ENCODE measurements at regions of chr13 and their contacts with region 1.

Region 1: DNA sequence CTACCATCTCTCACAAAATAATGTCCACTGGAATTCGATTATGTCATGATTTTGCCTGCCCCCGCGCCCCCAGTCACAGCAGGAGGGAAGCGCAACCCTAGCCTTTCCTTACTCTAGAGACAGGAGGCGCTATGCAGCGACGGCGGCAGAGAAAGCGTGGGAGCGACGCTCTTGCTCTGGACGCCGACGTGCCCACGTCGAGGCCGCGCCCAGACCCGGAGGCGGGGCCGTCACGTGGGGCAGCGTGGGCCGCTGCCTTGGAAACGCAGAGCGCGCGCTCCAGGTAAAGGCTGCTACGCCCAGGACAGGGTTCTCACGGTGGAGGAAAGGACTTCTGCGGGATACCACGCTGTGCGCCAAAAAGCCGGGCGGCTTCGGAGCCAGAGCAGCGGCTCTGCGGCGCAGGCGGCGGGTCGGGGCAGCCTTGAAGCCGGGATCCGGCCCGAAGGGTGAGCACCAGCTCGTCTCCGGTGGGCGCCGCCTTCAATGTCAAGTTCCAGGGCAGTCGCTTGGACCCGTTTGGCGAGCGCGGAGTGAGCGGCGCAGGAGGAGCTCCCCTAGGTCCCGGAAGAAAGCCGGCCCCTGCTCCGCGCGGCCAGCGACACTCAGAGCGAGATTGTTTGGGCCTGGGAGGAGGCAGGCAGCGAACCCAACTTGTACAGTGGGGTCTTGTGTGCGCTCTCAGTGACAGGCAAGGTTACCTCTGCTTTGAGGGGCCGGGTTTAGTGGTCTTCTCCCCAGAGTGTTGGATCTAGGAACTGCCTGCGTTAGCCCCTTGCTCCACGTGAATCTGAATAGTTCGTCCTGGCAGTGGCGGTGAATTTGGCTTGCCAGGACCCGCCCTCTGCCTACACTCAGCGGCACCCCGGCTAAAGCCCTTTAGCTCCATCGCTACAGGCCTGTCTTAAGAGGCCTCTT is 121.7 kb downstream of the MRPL57 start:
- DNase-seq: peak; percentile 84 to 86 (median 85)
- H3K4me3 ChIP-seq: peak overlapping the region; percentile 55 to 77
- H3K4me3 Mint-ChIP-seq: peak overlapping the region; percentile 80 to 90 (median 83)
- H3K27ac ChIP-seq: peak overlapping the region; percentile 59
- H3K27ac Mint-ChIP-seq: peak overlapping the region; percentile 38 to 89 (median 82)
- H3K4me1 ChIP-seq: peaks cover 24% of the 10 kb centered on the region
- H3K4me1 Mint-ChIP-seq: peaks cover 10 to 25% (median 18%) of the 10 kb centered on the region in 4 donors
- H3K27me3 ChIP-seq: no peaks in the 10 kb centered on the region
- H3K27me3 Mint-ChIP-seq: no peaks in the 10 kb centered on the region

Region 2: GRCh38 chr13:20940083-20940880 is 357.9 kb before region 1 on chr13:
- CTCF ChIA-PET with region 1: interaction called, 5 read pairs
- POLR2A ChIA-PET with region 1: no interaction called
- intact Hi-C with region 1: loop called (anchors 5 kb)
- DNase-seq: no peak
- H3K4me3 ChIP-seq: no peak overlapping the region
- H3K4me3 Mint-ChIP-seq: no peak overlapping the region
- H3K27ac ChIP-seq: no peak overlapping the region
- H3K27ac Mint-ChIP-seq: no peak overlapping the region
- H3K4me1 ChIP-seq: peaks cover 3% of the 10 kb centered on the region
- H3K4me1 Mint-ChIP-seq: peaks cover 0 to 8% (median under 1%) of the 10 kb centered on the region in 4 donors
- H3K27me3 ChIP-seq: no peaks in the 10 kb centered on the region
- H3K27me3 Mint-ChIP-seq: peaks cover 25 to 30% of the 10 kb centered on the region in 2 donors

Region 3: DNA sequence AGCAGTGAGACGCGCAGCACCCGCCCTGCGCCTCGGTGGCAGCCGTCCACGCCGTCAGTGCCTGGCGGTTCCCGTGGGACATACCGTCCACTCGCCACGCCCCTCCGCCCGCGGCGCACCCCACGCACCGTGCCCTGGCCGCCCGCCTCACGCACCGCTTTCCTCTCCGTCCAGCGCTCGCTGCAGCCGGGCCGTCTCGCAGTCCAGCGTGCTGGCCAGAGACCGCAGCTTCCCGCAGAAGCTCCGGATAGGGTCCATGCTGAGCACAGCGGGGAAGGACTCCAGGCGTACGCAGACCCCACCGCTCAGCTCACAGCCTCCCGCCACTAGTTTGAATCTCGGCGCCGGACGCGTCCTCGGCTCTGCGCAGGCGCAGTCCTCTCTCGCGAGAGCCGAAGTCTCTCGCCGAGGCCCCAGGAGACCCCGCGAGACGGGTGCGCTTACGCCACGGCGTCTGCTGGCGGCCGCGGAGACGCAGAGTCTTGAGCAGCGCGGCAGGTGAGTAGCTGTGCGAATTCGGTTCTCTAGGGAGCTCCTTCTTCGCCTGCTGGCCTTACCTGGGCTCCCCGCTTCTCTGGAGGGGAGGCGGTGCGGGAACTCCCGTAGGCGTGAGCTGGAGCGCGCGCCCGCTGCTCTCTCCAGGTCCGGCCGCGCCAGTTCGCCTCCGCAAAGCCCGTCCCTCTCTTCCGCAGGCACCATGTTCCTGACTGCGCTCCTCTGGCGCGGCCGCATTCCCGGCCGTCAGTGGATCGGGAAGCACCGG is 121.8 kb before region 1 on chr13 and contains the starts of genes MRPL57 and SKA3:
- CTCF ChIA-PET with region 1: interaction called, 17 read pairs
- POLR2A ChIA-PET with region 1: interaction called, 9 read pairs
- intact Hi-C with region 1: loop called (anchors 1 kb)
- DNase-seq: peak; percentile 92 to 95 (median 95)
- H3K4me3 ChIP-seq: peak within 1 kb of the TSS; percentile 57 to 84
- H3K4me3 Mint-ChIP-seq: peak within 1 kb of the TSS; percentile 91 to 99 (median 97)
- H3K27ac ChIP-seq: peak within 1 kb of the TSS; percentile 89
- H3K27ac Mint-ChIP-seq: peak within 1 kb of the TSS; percentile 91 to 99 (median 97)
- H3K4me1 ChIP-seq: peaks cover 21% of the 10 kb centered on the region
- H3K4me1 Mint-ChIP-seq: peaks cover 12 to 31% (median 17%) of the 10 kb centered on the region in 4 donors
- H3K27me3 ChIP-seq: no peaks in the 10 kb centered on the region
- H3K27me3 Mint-ChIP-seq: no peaks in the 10 kb centered on the region
- total RNA-seq, gene MRPL57: 22.8 to 24.5 TPM
- total RNA-seq, gene SKA3: 0.33 TPM in 1 of 2 experiments, not detected in the other

Region 4: GRCh38 chr13:21458813-21459701 is 160.9 kb after region 1 on chr13 and contains the start of gene ZDHHC20:
- CTCF ChIA-PET with region 1: interaction called, 9 read pairs
- POLR2A ChIA-PET with region 1: interaction called, 21 read pairs
- intact Hi-C with region 1: loop called (anchors 1 kb)
- DNase-seq: peak; percentile 82 to 93 (median 86)
- H3K4me3 ChIP-seq: peak within 1 kb of the TSS; percentile 34 to 72
- H3K4me3 Mint-ChIP-seq: peak within 1 kb of the TSS; percentile 92 to 95 (median 94)
- H3K27ac ChIP-seq: peak within 1 kb of the TSS; percentile 86
- H3K27ac Mint-ChIP-seq: peak within 1 kb of the TSS; percentile 84 to 97 (median 94)
- H3K4me1 ChIP-seq: peaks cover 39% of the 10 kb centered on the region
- H3K4me1 Mint-ChIP-seq: peaks cover 30 to 56% (median 42%) of the 10 kb centered on the region in 4 donors
- H3K27me3 ChIP-seq: no peaks in the 10 kb centered on the region
- H3K27me3 Mint-ChIP-seq: no peaks in the 10 kb centered on the region
- total RNA-seq, gene ZDHHC20: 69.5 to 72.3 TPM

Region 5: GRCh38 chr13:21476893-21477472 is 178.8 kb after region 1 on chr13:
- CTCF ChIA-PET with region 1: interaction called, 235 read pairs
- POLR2A ChIA-PET with region 1: interaction called, 14 read pairs
- intact Hi-C with region 1: loop called (anchors 1 kb)
- DNase-seq: peak; percentile 67 to 75 (median 70)
- H3K4me3 ChIP-seq: peak overlapping the region in 1 of 2 donors; percentile 42
- H3K4me3 Mint-ChIP-seq: peak overlapping the region; percentile 75 to 86 (median 83)
- H3K27ac ChIP-seq: no peak overlapping the region
- H3K27ac Mint-ChIP-seq: peak overlapping the region in 6 of 7 donors; percentile 2 to 76 (median 42)
- H3K4me1 ChIP-seq: peaks cover 15% of the 10 kb centered on the region
- H3K4me1 Mint-ChIP-seq: peaks cover 7 to 15% (median 10%) of the 10 kb centered on the region in 4 donors
- H3K27me3 ChIP-seq: no peaks in the 10 kb centered on the region
- H3K27me3 Mint-ChIP-seq: peaks cover 0 to 2% of the 10 kb centered on the region in 2 donors

Region 6: GRCh38 chr13:21670883-21671619 is 372.9 kb after region 1 on chr13 and contains the start of gene FGF9:
- CTCF ChIA-PET with region 1: no interaction called
- POLR2A ChIA-PET with region 1: no interaction called
- intact Hi-C with region 1: loop called (anchors 2 kb)
- DNase-seq: peak; percentile 83 to 89 (median 87)
- H3K4me3 ChIP-seq: peak within 1 kb of the TSS; percentile 69 to 86
- H3K4me3 Mint-ChIP-seq: peak within 1 kb of the TSS; percentile 89 to 98 (median 92)
- H3K27ac ChIP-seq: peak within 1 kb of the TSS; percentile 19
- H3K27ac Mint-ChIP-seq: peak within 1 kb of the TSS; percentile 65 to 93 (median 89)
- H3K4me1 ChIP-seq: peaks cover 45% of the 10 kb centered on the region
- H3K4me1 Mint-ChIP-seq: peaks cover 30 to 58% (median 40%) of the 10 kb centered on the region in 4 donors
- H3K27me3 ChIP-seq: peaks cover 11% of the 10 kb centered on the region
- H3K27me3 Mint-ChIP-seq: peaks cover 6 to 7% of the 10 kb centered on the region in 2 donors
- total RNA-seq, gene FGF9: 6.5 to 7.3 TPM

Region 7: DNA sequence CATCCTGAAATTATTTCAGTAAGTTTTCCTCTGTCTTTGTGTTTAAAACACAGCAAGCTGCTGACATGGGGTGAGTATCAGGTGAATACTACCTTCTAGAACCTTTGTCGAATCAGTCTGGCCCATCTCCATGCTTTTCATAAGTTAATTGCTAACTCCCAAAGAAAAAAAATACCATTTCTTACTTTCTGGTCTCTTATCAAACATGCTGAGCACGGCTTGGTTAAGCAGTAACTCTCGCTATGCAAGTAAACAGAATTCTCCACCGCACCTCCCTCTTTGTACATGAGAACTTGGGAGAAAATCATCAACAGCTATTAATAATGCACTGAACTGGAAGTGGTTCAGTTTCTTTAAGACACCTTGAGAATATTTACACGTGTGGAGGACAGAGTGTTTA is 461.3 kb after region 1 on chr13:
- CTCF ChIA-PET with region 1: no interaction called
- POLR2A ChIA-PET with region 1: no interaction called
- intact Hi-C with region 1: no loop called
- DNase-seq: no peak
- H3K4me3 ChIP-seq: no peak overlapping the region
- H3K4me3 Mint-ChIP-seq: no peak overlapping the region
- H3K27ac ChIP-seq: no peak overlapping the region
- H3K27ac Mint-ChIP-seq: no peak overlapping the region
- H3K4me1 ChIP-seq: no peaks in the 10 kb centered on the region
- H3K4me1 Mint-ChIP-seq: no peaks in the 10 kb centered on the region
- H3K27me3 ChIP-seq: no peaks in the 10 kb centered on the region
- H3K27me3 Mint-ChIP-seq: peaks cover 4 to 5% of the 10 kb centered on the region in 2 donors